ENCODE measurements at regions of chr6 and their contacts with region 1.

Region 1: GRCh38 chr6:107820338-107821261 is 3.5 kb downstream of the SCML4 start:
- DNase-seq: peak; percentile 66
- ATAC-seq: peak; percentile 2
- H3K4me3 Mint-ChIP-seq: peak overlapping the region; percentile 84
- H3K27ac Mint-ChIP-seq: peak overlapping the region; percentile 98
- H3K4me1 Mint-ChIP-seq: peaks cover 76% of the 10 kb centered on the region
- H3K27me3 Mint-ChIP-seq: no peaks in the 10 kb centered on the region

Region 2: DNA sequence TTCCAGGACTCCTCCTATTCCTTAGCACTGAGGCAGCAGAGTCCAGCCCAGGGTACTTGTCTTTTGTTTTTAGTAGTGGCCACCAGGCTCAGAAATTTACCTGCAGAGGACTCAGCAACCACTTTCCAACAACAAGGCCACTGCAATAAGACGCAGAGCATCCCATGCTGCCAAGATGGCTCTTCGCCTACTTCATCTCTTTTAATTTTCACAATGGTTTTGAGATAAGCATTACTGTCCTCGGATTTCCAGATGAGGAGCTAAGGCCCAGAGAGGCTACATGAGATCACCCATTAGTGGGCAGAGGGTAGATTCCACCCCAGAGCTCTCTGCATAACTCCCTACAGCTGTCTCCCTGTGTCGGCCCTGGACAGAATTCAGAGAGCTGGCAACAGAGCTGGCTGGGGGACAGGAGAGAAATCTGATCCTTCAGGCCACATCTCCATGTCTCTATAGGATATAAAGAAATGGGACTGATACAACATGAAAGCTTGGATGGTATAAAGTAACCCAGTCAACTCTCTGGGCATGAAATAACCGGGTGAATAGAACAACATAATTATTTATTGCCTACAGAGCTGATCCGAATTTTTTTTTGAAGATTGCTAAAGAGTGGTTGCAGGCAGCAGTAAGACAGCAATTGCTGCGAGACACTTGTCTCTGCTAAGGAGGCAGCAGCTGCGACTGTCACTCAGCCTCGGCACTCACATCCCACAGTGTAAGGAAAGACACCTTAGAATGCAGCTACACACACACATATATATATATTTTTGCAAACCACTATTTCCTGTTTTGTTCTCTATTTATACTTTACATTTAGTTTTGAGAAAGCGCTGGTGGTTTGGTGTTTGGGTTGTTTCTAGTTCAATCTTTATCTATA is 33.7 kb before region 1 on chr6:
- CTCF ChIA-PET with region 1: interaction called, 15 read pairs
- DNase-seq: peak; percentile 79
- ATAC-seq: peak; percentile 89
- H3K4me3 Mint-ChIP-seq: peak overlapping the region; percentile 65
- H3K27ac Mint-ChIP-seq: peak overlapping the region; percentile 86
- H3K4me1 Mint-ChIP-seq: peaks cover 54% of the 10 kb centered on the region
- H3K27me3 Mint-ChIP-seq: no peaks in the 10 kb centered on the region